Caco-2 (cell line): ENCODE measurements at regions of chr1 and their contacts with region 1.

Region 1: GRCh38 chr1:167454894-167455785 is 63.2 kb downstream of the CD247 start:
- DNase-seq: peak; percentile 48 to 57
- H3K4me3 ChIP-seq: peak overlapping the region; percentile 67
- H3K4me3 Mint-ChIP-seq: peak overlapping the region; percentile 70
- H3K27ac Mint-ChIP-seq: no peak overlapping the region
- H3K4me1 ChIP-seq: 0 out of 2 replicates have a peak, but pooled peaks cover 4% of the 10 kb centered on the region
- H3K4me1 Mint-ChIP-seq: no peaks in the 10 kb centered on the region
- H3K27me3 ChIP-seq: no peaks in the 10 kb centered on the region; the same call in 1 of the 2 replicates
- H3K27me3 Mint-ChIP-seq: no peaks in the 10 kb centered on the region
- CTCF ChIP-seq: no peak

Region 2: GRCh38 chr1:167648978-167649744 is 194.0 kb after region 1 on chr1:
- CTCF ChIA-PET with region 1: no interaction called
- POLR2A ChIA-PET with region 1: no interaction called
- intact Hi-C with region 1: loop called (anchors 5 kb)
- DNase-seq: no peak
- H3K4me3 ChIP-seq: no peak overlapping the region
- H3K4me3 Mint-ChIP-seq: no peak overlapping the region
- H3K27ac Mint-ChIP-seq: no peak overlapping the region
- H3K4me1 ChIP-seq: no peaks in the 10 kb centered on the region
- H3K4me1 Mint-ChIP-seq: no peaks in the 10 kb centered on the region
- H3K27me3 ChIP-seq: no peaks in the 10 kb centered on the region
- H3K27me3 Mint-ChIP-seq: peaks cover 3% of the 10 kb centered on the region
- CTCF ChIP-seq: no peak